Dorsolateral prefrontal cortex (tissue), 120 donors: ENCODE measurements at regions of chr22 and their contacts with region 1.

Region 1: GRCh38 chr22:25475257-25476022 is 89.0 kb upstream of the GRK3 start:
- DNase-seq: no peak
- H3K4me3 ChIP-seq: no peak overlapping the region
- H3K27ac ChIP-seq: peak overlapping the region in 4 of 59 donors; percentile 2 to 41 (median 12)
- H3K27me3 ChIP-seq: no peaks in the 10 kb centered on the region
- CTCF ChIP-seq: no peak

Region 2: GRCh38 chr22:25514436-25515180 is 39.2 kb after region 1 on chr22:
- intact Hi-C with region 1: no loop called
- DNase-seq: no peak
- H3K4me3 ChIP-seq: no peak overlapping the region
- H3K27ac ChIP-seq: no peak overlapping the region
- H3K27me3 ChIP-seq: no peaks in the 10 kb centered on the region
- CTCF ChIP-seq: no peak

Region 3: GRCh38 chr22:25564320-25564978 is 89.0 kb after region 1 on chr22 and contains the start of gene GRK3:
- intact Hi-C with region 1: loop called in 1 of 2 experiments (anchors 10 kb)
- DNase-seq: peak in 8 of 10 donors; percentile 26 to 70 (median 57)
- H3K4me3 ChIP-seq: peak within 1 kb of the TSS; percentile 55 to 93 (median 81)
- H3K27ac ChIP-seq: peak within 1 kb of the TSS in 56 of 59 donors; percentile 20 to 88 (median 72)
- H3K27me3 ChIP-seq: no peaks in the 10 kb centered on the region
- CTCF ChIP-seq: no peak
- total RNA-seq, gene GRK3: 24.2 to 87.3 (median 56.7) TPM